ENCODE measurements at regions of chr11 and their contacts with region 1.

Region 1: GRCh38 chr11:72642884-72643511 is 31.2 kb downstream of the PDE2A start:
- DNase-seq: peak; percentile 84
- H3K4me3 Mint-ChIP-seq: no peak overlapping the region
- H3K27ac Mint-ChIP-seq: no peak overlapping the region
- H3K4me1 Mint-ChIP-seq: peaks cover 7% of the 10 kb centered on the region
- H3K27me3 Mint-ChIP-seq: no peaks in the 10 kb centered on the region
- CTCF ChIP-seq: peak; percentile 97

Region 2: DNA sequence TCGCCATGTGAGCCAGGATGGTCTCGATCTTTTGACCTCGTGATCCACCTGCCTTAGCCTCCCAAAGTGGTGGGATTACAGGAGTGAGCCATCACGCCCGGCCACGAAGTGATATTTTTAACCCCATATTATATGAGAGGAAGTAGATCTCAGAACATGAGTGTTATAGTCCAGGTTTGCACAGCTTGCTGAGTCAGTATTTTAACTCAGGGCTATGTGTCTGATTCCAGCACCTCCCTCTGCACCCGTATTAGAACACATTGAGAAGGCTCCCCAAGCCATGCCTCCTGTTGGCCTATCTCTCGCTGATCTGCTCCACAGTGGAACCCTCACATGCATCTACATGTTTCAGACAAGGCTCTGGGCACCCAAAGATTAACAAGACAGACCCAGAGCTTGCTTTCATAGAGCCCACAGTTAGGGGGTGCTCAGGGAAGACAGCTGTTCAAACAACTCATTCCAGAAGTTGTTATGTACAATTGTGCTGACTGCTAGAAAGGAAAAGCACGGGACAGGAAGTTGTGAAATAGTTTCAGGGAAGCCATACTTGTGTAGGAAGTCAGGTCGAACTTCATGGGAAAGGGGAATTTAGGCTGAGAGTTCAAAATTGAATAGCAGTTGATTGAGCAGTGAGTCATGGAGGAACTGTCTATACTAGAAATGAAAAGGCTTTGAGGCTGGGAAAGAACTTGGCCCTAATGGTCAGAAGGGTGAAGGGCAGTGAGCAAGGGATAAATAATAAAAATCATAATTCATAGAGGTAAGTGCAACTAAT is 159.4 kb before region 1 on chr11:
- CTCF ChIA-PET with region 1: interaction called, 3 read pairs
- POLR2A ChIA-PET with region 1: no interaction called
- intact Hi-C with region 1: loop called (anchors 1 kb)
- DNase-seq: peak; percentile 44
- H3K4me3 Mint-ChIP-seq: no peak overlapping the region
- H3K27ac Mint-ChIP-seq: peak overlapping the region; percentile 91
- H3K4me1 Mint-ChIP-seq: peaks cover 15% of the 10 kb centered on the region
- H3K27me3 Mint-ChIP-seq: no peaks in the 10 kb centered on the region
- CTCF ChIP-seq: no peak

Region 3: GRCh38 chr11:72598906-72599305 is 44.1 kb before region 1 on chr11:
- CTCF ChIA-PET with region 1: interaction called, 3 read pairs
- POLR2A ChIA-PET with region 1: interaction called, 3 read pairs
- intact Hi-C with region 1: loop called (anchors 2 kb)
- DNase-seq: peak; percentile 27
- H3K4me3 Mint-ChIP-seq: no peak overlapping the region
- H3K27ac Mint-ChIP-seq: no peak overlapping the region
- H3K4me1 Mint-ChIP-seq: peaks cover 11% of the 10 kb centered on the region
- H3K27me3 Mint-ChIP-seq: peaks cover 52% of the 10 kb centered on the region
- CTCF ChIP-seq: peak; percentile 18

Region 4: GRCh38 chr11:72676861-72677341 is 33.9 kb after region 1 on chr11:
- CTCF ChIA-PET with region 1: interaction called, 10 read pairs
- POLR2A ChIA-PET with region 1: no interaction called
- intact Hi-C with region 1: no loop called
- DNase-seq: peak; percentile 53
- H3K4me3 Mint-ChIP-seq: no peak overlapping the region
- H3K27ac Mint-ChIP-seq: no peak overlapping the region
- H3K4me1 Mint-ChIP-seq: peaks cover 4% of the 10 kb centered on the region
- H3K27me3 Mint-ChIP-seq: peaks cover 82% of the 10 kb centered on the region
- CTCF ChIP-seq: no peak

Measured in MCF 10A (cell line).